Dorsolateral prefrontal cortex (tissue), 120 donors: ENCODE measurements at regions of chr1 and their contacts with region 1.

Region 1: GRCh38 chr1:222814536-222815439 is at the start of gene DISP1:
- DNase-seq: peak; percentile 52 to 87 (median 80)
- H3K4me3 ChIP-seq: peak within 1 kb of the TSS; percentile 65 to 99 (median 90)
- H3K27ac ChIP-seq: peak within 1 kb of the TSS in 57 of 59 donors; percentile 48 to 95 (median 86)
- H3K27me3 ChIP-seq: peaks cover 0 to 6% (median 0%) of the 10 kb centered on the region in 45 donors
- CTCF ChIP-seq: peak in 11 of 56 donors; percentile 13 to 47 (median 18)
- total RNA-seq, gene DISP1: 2.7 to 12.2 (median 6.9) TPM

Region 2: GRCh38 chr1:221239792-221240191 is 1575.0 kb before region 1 on chr1:
- intact Hi-C with region 1: no loop called
- DNase-seq: no peak
- H3K4me3 ChIP-seq: no peak overlapping the region
- H3K27ac ChIP-seq: no peak overlapping the region
- H3K27me3 ChIP-seq: no peaks in the 10 kb centered on the region
- CTCF ChIP-seq: no peak

Region 3: GRCh38 chr1:222465211-222466041 is 349.4 kb before region 1 on chr1:
- intact Hi-C with region 1: no loop called
- DNase-seq: peak; percentile 76 to 92 (median 84)
- H3K4me3 ChIP-seq: peak overlapping the region; percentile 31 to 81 (median 62)
- H3K27ac ChIP-seq: peak overlapping the region; percentile 13 to 93 (median 82)
- H3K27me3 ChIP-seq: peaks cover 0 to 3% (median 0%) of the 10 kb centered on the region in 45 donors
- CTCF ChIP-seq: peak; percentile 95 to 100 (median 100)

Region 4: GRCh38 chr1:222732216-222733159 is 82.3 kb before region 1 on chr1:
- intact Hi-C with region 1: loop called in 1 of 2 experiments (anchors 10 kb)
- DNase-seq: no peak
- H3K4me3 ChIP-seq: no peak overlapping the region
- H3K27ac ChIP-seq: peak overlapping the region in 30 of 59 donors; percentile 1 to 67 (median 40)
- H3K27me3 ChIP-seq: no peaks in the 10 kb centered on the region
- CTCF ChIP-seq: no peak

Region 5: GRCh38 chr1:222861062-222861461 is 46.3 kb after region 1 on chr1:
- intact Hi-C with region 1: no loop called
- DNase-seq: no peak
- H3K4me3 ChIP-seq: no peak overlapping the region
- H3K27ac ChIP-seq: no peak overlapping the region
- H3K27me3 ChIP-seq: no peaks in the 10 kb centered on the region
- CTCF ChIP-seq: no peak